ENCODE measurements at regions of chr3 and their contacts with region 1.

Region 1: GRCh38 chr3:32420126-32421038 is 28.7 kb downstream of the CMTM7 start:
- DNase-seq: peak; percentile 78
- CTCF ChIP-seq: no peak

Region 2: DNA sequence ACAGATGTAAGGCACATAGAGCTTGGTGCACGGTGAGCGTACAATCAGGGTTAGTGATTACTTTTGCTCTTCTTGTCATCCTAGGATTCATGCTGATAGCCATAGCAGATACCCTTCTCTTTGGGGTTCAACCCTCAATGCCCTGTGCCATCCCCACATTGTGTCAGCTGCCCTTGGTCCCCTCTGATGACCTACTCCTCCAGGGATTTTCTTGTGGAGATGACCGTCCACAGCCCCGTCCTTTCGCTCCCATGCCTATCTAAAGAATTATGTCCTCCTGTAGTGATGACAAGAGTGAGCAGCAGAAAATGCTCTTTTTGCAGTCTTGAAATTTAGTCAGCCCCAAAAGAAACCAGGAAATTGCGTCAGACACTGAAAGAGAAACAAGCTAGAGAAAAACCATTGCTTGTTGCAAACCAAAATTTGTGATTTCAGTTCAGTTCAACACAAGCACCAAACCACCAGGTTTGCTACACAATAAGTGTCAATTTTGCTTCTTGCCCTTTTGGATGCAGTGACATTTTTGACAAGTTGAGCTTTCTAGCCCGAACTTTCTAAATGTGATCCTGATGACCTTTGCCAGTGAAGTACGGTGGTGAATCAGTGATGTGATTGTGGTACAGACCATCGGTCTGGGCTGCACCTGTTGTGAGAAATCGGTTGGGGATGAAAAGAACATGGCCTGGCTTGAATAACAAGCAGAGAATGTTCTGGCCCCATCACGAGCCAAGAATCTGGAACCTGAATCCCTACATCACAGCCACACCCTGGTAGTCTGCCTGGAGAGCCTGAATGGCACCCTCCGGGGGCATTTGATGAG is 12.5 kb after region 1 on chr3:
- CTCF ChIA-PET with region 1: interaction called, 70 read pairs
- POLR2A ChIA-PET with region 1: no interaction called
- DNase-seq: peak; percentile 52
- CTCF ChIP-seq: no peak

Region 3: GRCh38 chr3:32438596-32439344 is 18.4 kb after region 1 on chr3:
- CTCF ChIA-PET with region 1: interaction called, 70 read pairs
- POLR2A ChIA-PET with region 1: no interaction called
- DNase-seq: peak; percentile 85
- CTCF ChIP-seq: no peak